ENCODE measurements at regions of chr7 and their contacts with region 1.

Region 1: GRCh38 chr7:47088329-47089067 is 493.4 kb downstream of the TNS3 start:
- DNase-seq: peak; percentile 31
- H3K4me3 ChIP-seq: no peak overlapping the region
- H3K27ac ChIP-seq: no peak overlapping the region
- H3K4me1 ChIP-seq: peaks cover 10% of the 10 kb centered on the region
- H3K27me3 ChIP-seq: no peaks in the 10 kb centered on the region
- CTCF ChIP-seq: peak; percentile 87 to 89

Region 2: DNA sequence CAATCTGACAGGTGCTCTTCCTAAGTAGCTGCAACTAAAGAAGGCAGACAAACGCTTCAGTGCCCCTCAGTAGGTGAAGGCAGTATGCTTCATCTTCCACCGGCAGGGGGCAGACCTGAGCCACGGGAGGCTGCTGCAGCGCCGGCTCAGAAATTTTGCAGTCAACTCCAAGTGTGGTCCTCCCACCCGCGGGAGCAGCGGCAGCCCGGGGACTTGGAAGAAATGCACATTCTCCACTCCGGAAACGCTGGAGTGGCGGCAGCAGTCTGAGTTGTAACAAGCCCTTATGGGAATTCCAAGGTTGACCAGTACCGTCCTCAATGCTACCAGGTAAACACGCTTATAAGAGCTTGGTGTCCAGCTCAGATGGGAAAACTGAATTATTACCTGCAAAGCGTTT is 1170.8 kb before region 1 on chr7:
- CTCF ChIA-PET with region 1: no interaction called
- dilution Hi-C with region 1: no loop called
- in situ Hi-C with region 1: loop called (anchors 25 kb)
- intact Hi-C with region 1: loop called (anchors 2 kb)
- DNase-seq: peak; percentile 35
- H3K4me3 ChIP-seq: no peak overlapping the region
- H3K27ac ChIP-seq: no peak overlapping the region
- H3K4me1 ChIP-seq: peaks cover 19% of the 10 kb centered on the region
- H3K27me3 ChIP-seq: peaks cover 6% of the 10 kb centered on the region
- CTCF ChIP-seq: peak; percentile 90 to 95

Region 3: GRCh38 chr7:46357290-46357689 is 731.2 kb before region 1 on chr7:
- CTCF ChIA-PET with region 1: no interaction called
- dilution Hi-C with region 1: loop called (anchors 5 kb)
- in situ Hi-C with region 1: loop called (anchors 5 to 10 kb)
- intact Hi-C with region 1: loop called (anchors 2 kb)
- DNase-seq: no peak
- H3K4me3 ChIP-seq: no peak overlapping the region
- H3K27ac ChIP-seq: no peak overlapping the region
- H3K4me1 ChIP-seq: no peaks in the 10 kb centered on the region
- H3K27me3 ChIP-seq: no peaks in the 10 kb centered on the region
- CTCF ChIP-seq: no peak

Region 4: DNA sequence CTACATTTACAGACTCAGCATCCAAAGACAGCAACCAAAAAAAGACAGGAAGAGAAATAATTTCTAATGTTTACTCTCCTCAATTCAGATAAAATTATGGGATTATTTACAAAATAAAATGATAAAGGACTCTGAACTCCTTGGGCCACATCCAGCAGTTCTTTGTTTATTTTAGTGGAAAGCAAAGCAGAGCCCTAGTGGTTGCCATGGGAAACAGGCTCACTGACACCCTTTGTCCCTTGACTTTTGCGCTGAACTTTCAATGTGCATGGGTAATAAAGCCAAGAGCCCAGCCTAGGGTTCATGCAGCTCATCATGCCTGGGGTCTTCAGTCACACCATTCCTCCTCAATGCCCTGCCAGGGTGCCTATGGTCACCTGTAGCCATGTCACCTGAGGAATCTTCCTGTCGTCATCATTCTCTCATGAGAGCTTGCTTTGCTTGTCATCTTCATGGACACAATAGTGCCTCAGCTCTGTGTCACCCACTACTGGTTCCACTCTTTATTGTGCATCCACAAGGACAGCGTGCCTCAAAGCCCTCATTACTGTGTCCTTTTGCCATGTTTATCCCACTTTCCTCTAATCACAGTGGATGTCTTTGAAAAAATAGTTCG is 724.7 kb before region 1 on chr7:
- CTCF ChIA-PET with region 1: no interaction called
- dilution Hi-C with region 1: loop called (anchors 5 kb)
- in situ Hi-C with region 1: loop called (anchors 5 to 10 kb)
- intact Hi-C with region 1: no loop called
- DNase-seq: no peak
- H3K4me3 ChIP-seq: no peak overlapping the region
- H3K27ac ChIP-seq: no peak overlapping the region
- H3K4me1 ChIP-seq: no peaks in the 10 kb centered on the region
- H3K27me3 ChIP-seq: no peaks in the 10 kb centered on the region
- CTCF ChIP-seq: no peak

Region 5: DNA sequence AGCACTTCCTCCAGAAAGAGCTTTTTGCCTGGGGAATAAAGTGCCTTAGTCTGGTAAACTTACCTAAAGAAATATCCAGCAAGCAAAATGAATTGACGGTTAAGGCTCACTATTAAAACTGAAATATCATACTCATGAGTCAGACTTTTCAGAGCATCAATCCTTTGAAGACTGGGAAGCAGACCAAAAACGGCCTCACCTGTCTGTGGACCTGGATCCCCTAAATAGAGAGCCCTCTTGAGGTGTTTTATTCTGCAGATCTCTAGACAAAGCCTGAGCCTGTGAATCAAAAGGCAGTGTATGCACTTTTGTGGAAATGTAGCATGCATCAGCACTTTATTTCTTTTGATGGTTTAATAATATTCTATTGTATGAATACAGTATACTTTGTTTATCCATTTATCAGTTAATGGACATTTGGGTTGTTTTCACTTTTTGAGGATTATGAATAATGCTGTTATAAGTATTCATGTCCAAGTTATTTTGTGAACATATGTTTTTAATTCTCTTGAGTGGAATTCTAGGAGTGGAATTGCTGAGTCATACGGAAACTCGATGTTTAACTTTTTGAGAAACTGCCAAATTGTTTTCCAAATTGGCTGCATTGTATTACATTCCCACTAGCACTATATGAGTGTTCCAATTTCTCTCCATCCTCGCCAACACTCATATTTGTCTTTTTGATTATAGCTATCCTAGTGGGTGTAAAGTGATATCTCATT is 718.4 kb before region 1 on chr7:
- CTCF ChIA-PET with region 1: no interaction called
- dilution Hi-C with region 1: no loop called
- in situ Hi-C with region 1: loop called in 1 of 2 experiments (anchors 10 kb)
- intact Hi-C with region 1: no loop called
- DNase-seq: peak; percentile 56
- H3K4me3 ChIP-seq: no peak overlapping the region
- H3K27ac ChIP-seq: no peak overlapping the region
- H3K4me1 ChIP-seq: peaks cover 10% of the 10 kb centered on the region
- H3K27me3 ChIP-seq: no peaks in the 10 kb centered on the region
- CTCF ChIP-seq: no peak

Region 6: DNA sequence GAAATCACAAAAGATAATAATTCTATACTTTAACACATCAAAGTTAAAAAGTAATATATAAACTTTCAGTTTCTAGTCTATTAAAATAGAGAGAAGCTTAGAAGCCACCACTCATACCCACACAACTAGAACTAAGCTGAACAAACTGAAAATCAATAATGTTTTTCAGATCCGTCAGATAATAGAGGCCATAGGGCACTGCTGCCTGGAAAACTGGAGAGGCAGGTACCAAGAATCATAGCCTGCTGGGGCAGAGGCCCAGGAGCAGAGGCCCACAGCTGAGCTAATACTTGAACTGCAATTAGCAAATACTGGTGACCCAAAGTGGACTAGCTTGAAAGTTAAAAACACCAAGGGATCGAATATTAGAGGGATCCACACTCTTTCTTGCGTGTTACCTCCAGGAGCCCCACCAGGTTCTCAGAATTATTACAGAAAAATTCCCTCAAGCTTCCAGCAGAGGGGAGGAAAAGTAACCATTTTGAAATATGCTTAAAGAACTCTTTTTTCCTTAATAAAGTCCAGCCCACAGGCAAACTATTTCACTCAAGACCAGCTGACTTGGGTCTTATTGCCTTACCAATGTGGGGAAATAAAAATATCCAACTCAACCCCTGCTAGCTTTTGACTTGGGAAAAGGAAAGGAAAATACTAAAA is 393.3 kb before region 1 on chr7:
- CTCF ChIA-PET with region 1: no interaction called
- dilution Hi-C with region 1: no loop called
- in situ Hi-C with region 1: no loop called
- intact Hi-C with region 1: loop called (anchors 1 kb)
- DNase-seq: no peak
- H3K4me3 ChIP-seq: no peak overlapping the region
- H3K27ac ChIP-seq: no peak overlapping the region
- H3K4me1 ChIP-seq: no peaks in the 10 kb centered on the region
- H3K27me3 ChIP-seq: no peaks in the 10 kb centered on the region
- CTCF ChIP-seq: no peak

Region 7: DNA sequence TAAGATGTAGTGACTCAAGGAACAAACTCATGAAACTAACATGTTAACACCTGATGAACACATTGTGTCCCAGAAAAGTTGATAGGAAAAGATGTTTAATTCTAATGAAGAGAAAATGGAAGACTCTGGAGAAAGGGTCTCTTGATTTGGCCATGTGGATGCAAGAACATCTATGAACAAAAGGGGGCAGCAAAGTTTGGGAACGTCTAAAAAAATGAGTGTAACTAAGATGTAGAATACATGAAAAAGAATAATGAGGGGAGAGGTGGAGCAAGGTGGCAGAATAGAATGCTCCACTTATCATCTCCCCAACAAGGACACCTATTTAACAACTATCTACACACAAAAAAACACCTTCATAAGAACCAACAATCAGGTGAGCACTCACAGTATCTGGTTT is 311.7 kb before region 1 on chr7:
- CTCF ChIA-PET with region 1: no interaction called
- dilution Hi-C with region 1: no loop called
- in situ Hi-C with region 1: loop called in 1 of 2 experiments (anchors 25 kb)
- intact Hi-C with region 1: loop called (anchors 1 kb)
- DNase-seq: peak; percentile 16
- H3K4me3 ChIP-seq: no peak overlapping the region
- H3K27ac ChIP-seq: no peak overlapping the region
- H3K4me1 ChIP-seq: no peaks in the 10 kb centered on the region
- H3K27me3 ChIP-seq: no peaks in the 10 kb centered on the region
- CTCF ChIP-seq: peak; percentile 49 to 58

Region 8: GRCh38 chr7:47026780-47027361 is 61.6 kb before region 1 on chr7:
- CTCF ChIA-PET with region 1: no interaction called
- dilution Hi-C with region 1: no loop called
- in situ Hi-C with region 1: no loop called
- intact Hi-C with region 1: no loop called
- DNase-seq: no peak
- H3K4me3 ChIP-seq: no peak overlapping the region
- H3K27ac ChIP-seq: no peak overlapping the region
- H3K4me1 ChIP-seq: no peaks in the 10 kb centered on the region
- H3K27me3 ChIP-seq: peaks cover 12% of the 10 kb centered on the region
- CTCF ChIP-seq: no peak

Region 9: DNA sequence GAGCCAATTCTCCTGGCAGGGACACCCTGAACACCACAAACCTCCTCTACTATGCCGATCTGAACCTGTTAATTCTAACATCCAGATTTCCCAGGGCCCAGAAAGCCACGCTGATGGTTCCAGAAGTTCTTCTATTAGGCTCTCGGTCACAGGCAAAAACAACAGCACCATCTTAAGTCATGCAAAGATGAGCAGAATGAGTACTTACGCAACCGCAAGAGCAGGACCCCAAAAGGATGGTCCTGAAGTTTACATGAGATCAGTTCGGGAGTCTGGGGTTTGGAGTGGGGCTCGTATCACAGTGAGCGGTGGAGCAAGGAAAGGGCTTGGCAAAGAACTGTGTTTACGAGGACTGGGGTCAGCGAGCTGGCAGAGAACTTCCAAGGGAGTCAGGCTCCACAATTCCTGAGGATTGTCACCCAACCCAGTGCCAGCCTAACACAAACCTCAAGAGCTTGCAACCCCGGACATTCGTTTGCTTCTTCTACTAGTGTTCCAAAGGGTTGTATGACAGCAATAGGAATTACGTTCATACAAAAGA is 39.2 kb before region 1 on chr7:
- CTCF ChIA-PET with region 1: no interaction called
- dilution Hi-C with region 1: no loop called
- in situ Hi-C with region 1: no loop called
- intact Hi-C with region 1: no loop called
- DNase-seq: no peak
- H3K4me3 ChIP-seq: no peak overlapping the region
- H3K27ac ChIP-seq: no peak overlapping the region
- H3K4me1 ChIP-seq: no peaks in the 10 kb centered on the region
- H3K27me3 ChIP-seq: peaks cover 16% of the 10 kb centered on the region
- CTCF ChIP-seq: no peak